Ovary (tissue), 10 donors: ENCODE measurements at regions of chr19 and their contacts with region 1.

Region 1: GRCh38 chr19:53849237-53849676 is 18.4 kb upstream of the MYADM start:
- DNase-seq: no peak
- H3K4me3 ChIP-seq: no peak overlapping the region
- H3K27ac ChIP-seq: no peak overlapping the region
- H3K4me1 ChIP-seq: no peaks in the 10 kb centered on the region
- H3K27me3 ChIP-seq: no peaks in the 10 kb centered on the region
- CTCF ChIP-seq: no peak
- EP300 ChIP-seq: no peak
- POLR2A ChIP-seq: no peak

Region 2: GRCh38 chr19:53772943-53773342 is 76.3 kb before region 1 on chr19:
- intact Hi-C with region 1: no loop called
- DNase-seq: peak in 3 of 5 donors; percentile 15 to 44 (median 21)
- H3K4me3 ChIP-seq: no peak overlapping the region
- H3K27ac ChIP-seq: no peak overlapping the region
- H3K4me1 ChIP-seq: no peaks in the 10 kb centered on the region
- H3K27me3 ChIP-seq: no peaks in the 10 kb centered on the region
- CTCF ChIP-seq: peak in 2 of 3 donors; percentile 39 to 49
- EP300 ChIP-seq: no peak
- POLR2A ChIP-seq: no peak

Region 3: DNA sequence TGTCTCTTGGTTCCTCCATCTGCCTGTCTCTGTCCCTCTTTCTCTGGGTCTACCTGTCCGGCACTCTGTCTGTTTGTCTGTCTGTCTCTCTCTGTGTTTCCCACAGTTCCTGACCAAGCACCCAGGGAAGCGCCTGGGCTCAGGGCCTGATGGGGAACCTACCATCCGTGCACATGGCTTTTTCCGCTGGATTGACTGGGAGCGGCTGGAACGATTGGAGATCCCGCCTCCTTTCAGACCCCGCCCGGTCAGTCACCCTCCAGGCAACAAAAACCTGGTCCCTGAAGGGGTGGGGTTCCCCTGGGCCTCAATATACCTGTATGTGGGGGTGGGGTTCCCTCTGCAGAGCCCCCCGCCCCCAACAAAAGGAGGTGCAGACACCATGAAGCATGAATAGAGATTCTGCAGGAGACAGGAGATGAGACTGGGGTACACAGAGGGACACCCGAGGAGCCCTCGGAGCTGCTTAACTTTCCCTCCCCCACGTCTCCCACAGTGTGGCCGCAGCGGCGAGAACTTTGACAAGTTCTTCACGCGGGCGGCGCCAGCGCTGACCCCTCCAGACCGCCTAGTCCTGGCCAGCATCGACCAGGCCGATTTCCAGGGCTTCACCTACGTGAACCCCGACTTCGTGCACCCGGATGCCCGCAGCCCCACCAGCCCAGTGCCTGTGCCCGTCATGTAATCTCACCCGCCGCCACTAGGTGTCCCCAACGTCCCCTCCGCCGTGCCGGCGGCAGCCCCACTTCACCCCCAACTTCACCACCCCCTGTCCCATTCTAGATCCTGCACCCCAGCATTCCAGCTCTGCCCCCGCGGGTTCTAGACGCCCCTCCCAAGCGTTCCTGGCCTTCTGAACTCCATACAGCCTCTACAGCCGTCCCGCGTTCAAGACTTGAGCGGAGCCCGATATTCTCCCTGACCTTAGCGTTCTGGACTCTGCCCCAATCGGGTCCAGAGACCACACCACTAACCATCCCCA is 57.2 kb after region 1 on chr19:
- intact Hi-C with region 1: loop called in 1 of 4 experiments (anchors 10 kb)
- DNase-seq: peak in 2 of 5 donors; percentile 31 to 53
- H3K4me3 ChIP-seq: no peak overlapping the region
- H3K27ac ChIP-seq: no peak overlapping the region
- H3K4me1 ChIP-seq: peaks cover 2% of the 10 kb centered on the region
- H3K27me3 ChIP-seq: peaks cover 3% of the 10 kb centered on the region
- CTCF ChIP-seq: peak in 2 of 3 donors; percentile 17 to 26
- EP300 ChIP-seq: no peak
- POLR2A ChIP-seq: no peak

Region 4: DNA sequence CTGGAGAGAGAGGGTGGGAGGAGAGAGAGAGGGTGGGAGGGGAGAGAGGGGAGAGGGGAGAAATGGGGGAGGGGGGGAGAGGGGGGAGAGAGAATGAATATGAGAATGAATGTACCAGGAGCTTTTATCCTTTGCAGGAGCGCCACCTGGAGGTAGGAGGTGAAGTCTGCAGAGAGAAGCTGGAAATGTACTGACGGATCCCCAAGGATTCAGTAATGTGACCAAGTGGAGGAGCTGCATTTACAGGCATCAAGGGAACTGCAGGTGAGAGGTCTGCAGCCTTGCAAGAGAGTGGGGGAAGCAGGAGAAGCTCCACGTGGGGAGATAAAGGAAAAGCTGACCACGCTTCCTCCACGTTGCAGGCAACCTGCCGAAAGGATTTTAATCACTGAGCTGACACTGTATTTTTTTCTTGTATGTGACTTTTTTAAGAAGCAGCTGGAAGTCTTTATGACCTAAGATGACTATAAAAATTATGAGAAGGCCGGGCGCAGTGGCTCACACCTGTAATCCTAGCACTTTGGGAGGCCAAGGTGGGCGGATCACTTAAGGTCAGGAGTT is 180.8 kb after region 1 on chr19:
- intact Hi-C with region 1: loop called in 3 of 4 experiments (anchors 5 to 10 kb)
- DNase-seq: peak in 4 of 5 donors; percentile 19 to 45 (median 24)
- H3K4me3 ChIP-seq: no peak overlapping the region
- H3K27ac ChIP-seq: no peak overlapping the region
- H3K4me1 ChIP-seq: no peaks in the 10 kb centered on the region
- H3K27me3 ChIP-seq: no peaks in the 10 kb centered on the region
- CTCF ChIP-seq: no peak
- EP300 ChIP-seq: no peak
- POLR2A ChIP-seq: no peak